Heart right ventricle (tissue), 16 donors: ENCODE measurements at regions of chr5 and their contacts with region 1.

Region 1: GRCh38 chr5:80216753-80217596 is 38.9 kb downstream of the SERINC5 start:
- DNase-seq: peak; percentile 68 to 84
- ATAC-seq: peak; percentile 81 to 97 (median 93)
- H3K4me3 ChIP-seq: peak overlapping the region in 3 of 10 donors; percentile 0 to 31 (median 29)
- H3K27ac ChIP-seq: peak overlapping the region in 9 of 10 donors; percentile 14 to 87 (median 70)
- H3K4me1 ChIP-seq: peaks cover 2 to 64% (median 48%) of the 10 kb centered on the region in 9 donors
- H3K27me3 ChIP-seq: no peaks in the 10 kb centered on the region
- CTCF ChIP-seq: no peak

Region 2: DNA sequence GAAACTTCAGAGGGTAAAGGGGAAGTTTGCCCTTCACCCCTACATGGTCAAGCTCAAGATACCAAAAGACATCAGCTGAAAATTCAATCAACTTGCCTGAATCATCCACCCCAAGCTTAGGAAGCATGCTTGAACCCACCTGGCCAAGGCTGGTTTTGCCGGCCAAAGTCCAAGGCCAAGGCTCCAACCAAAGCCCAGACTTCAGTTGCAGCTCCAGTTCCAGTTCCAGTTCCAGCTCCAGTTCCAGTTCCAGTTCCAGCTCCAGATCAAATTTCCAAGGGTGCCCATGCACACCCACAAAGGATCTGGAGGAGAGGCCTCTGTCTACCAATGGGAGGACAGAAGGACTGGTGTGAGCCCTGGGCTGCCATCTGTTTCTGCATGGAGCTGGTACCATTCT is 43.5 kb after region 1 on chr5:
- intact Hi-C with region 1: no loop called
- DNase-seq: no peak
- ATAC-seq: no peak
- H3K4me3 ChIP-seq: no peak overlapping the region
- H3K27ac ChIP-seq: no peak overlapping the region
- H3K4me1 ChIP-seq: peaks cover 0 to 16% (median 11%) of the 10 kb centered on the region in 9 donors
- H3K27me3 ChIP-seq: no peaks in the 10 kb centered on the region
- CTCF ChIP-seq: no peak

Region 3: DNA sequence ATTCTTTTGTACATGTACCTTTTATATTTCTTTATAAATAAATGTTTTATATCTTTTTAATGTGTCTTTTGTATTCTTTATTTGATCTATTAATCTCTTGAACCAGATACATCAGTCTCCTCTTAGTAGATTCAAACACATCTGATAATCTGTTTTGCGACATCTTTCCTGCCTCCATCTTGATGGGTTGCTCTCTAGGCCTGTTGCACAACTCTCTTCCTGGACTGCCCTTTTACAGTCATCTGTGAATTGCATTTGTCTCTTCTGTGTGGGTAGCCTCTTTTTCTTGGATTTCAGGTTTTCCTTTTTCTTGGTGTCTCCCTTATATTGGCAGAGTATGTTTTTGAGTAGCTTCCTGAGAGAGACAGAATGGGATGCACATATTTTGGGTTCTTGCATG is 197.1 kb after region 1 on chr5:
- intact Hi-C with region 1: loop called in 1 of 10 experiments (anchors 5 kb)
- DNase-seq: no peak
- ATAC-seq: peak in 1 of 8 donors; percentile 29
- H3K4me3 ChIP-seq: no peak overlapping the region
- H3K27ac ChIP-seq: peak overlapping the region in 1 of 10 donors; percentile 5
- H3K4me1 ChIP-seq: peaks cover 0 to 42% (median 30%) of the 10 kb centered on the region in 9 donors
- H3K27me3 ChIP-seq: no peaks in the 10 kb centered on the region
- CTCF ChIP-seq: no peak